Gastrocnemius medialis (tissue), 4 donors: ENCODE measurements at regions of chr14 and their contacts with region 1.

Region 1: DNA sequence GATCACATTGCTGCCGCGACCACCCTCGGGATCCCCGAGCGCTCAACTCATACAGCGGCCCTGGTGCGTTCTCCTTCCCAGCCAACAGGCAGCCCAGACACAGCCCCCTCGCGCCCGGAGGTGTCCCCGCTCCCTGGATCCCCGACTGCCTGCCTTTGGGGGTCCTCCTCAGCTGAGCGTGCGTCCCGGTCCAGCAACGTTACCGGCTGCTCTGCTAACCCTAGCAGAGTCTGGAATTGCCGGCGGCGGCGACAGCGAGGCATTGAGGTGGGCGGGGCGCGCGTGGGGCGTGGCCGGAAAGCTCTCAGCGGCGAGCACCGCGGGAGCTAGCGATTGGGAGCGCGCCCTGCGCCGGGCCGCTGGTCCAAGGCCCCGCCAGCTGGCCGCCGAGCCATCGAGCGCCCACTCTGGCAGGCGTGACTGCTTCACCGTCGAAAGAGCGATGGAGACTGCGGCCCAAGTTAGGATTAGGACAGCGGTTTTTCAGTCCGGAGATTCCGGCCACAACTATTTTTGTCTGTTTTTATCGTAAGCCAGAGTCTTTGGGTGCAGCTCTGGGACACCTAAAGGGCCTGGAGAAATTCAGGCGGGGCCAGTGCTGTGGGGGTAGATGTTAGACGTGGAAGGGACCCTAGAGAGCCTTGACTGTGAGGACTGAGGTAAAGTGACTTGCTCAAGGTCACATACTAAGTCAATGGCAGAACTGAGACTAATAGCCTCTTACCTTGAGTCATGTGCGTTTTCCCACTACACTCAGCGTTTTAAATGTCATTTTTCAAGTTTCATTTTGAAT is at the start of gene HEATR5A:
- DNase-seq: peak; percentile 91 to 92
- ATAC-seq: peak; percentile 93
- H3K4me3 ChIP-seq: peak within 1 kb of the TSS; percentile 80 to 97 (median 96)
- H3K27ac ChIP-seq: peak within 1 kb of the TSS; percentile 92 to 94 (median 92)
- H3K4me1 ChIP-seq: peaks cover 16 to 21% of the 10 kb centered on the region in 2 donors
- H3K27me3 ChIP-seq: no peaks in the 10 kb centered on the region
- CTCF ChIP-seq: peak in 3 of 5 experiments; percentile 29 to 37 (median 32)
- POLR2A ChIP-seq: peak; percentile 99
- total RNA-seq, gene HEATR5A: 11.3 to 39.7 (median 19.3) TPM

Region 2: DNA sequence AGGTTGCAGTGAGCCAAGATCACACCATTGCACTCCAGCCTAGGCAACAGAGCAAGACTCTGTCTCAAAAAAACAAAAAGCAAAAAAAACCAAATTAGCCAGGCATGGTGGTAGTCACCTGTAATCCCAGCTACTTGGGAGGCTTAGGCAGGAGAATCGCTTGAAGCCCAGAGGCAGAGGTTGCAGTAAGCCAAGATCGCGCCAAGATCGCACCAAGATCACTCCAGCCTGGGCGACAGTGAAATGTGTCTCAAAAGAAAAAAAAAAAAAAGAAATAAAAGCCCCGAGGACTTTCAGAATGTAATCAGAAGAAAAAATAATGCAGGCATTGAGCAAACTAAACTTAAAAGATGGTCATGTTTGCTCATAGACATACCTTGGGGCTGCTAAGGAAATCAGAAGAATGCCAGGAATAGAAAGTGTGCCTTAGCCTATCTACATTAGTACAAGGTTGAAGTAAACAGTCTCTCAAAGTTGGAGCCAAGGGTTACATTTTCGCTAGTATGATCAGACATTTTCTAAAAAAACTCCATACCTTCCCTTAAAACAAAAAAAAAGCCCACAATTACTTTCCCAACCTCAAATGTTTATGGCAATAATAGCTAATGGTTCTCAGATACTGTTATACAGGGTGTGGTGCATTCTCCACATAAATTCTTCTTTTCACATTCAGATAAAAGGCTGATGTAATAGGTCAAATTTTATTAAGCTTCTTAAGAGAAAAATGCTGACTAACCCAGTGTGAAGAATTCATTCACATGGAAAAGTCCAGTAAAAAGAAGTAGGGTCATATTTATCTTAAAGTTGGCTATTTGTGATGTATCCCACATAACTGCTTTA is 21.0 kb after region 1 on chr14:
- in situ Hi-C with region 1: no loop called
- intact Hi-C with region 1: no loop called
- DNase-seq: no peak
- ATAC-seq: no peak
- H3K4me3 ChIP-seq: no peak overlapping the region
- H3K27ac ChIP-seq: no peak overlapping the region
- H3K4me1 ChIP-seq: no peaks in the 10 kb centered on the region
- H3K27me3 ChIP-seq: no peaks in the 10 kb centered on the region
- CTCF ChIP-seq: no peak
- POLR2A ChIP-seq: no peak

Region 3: DNA sequence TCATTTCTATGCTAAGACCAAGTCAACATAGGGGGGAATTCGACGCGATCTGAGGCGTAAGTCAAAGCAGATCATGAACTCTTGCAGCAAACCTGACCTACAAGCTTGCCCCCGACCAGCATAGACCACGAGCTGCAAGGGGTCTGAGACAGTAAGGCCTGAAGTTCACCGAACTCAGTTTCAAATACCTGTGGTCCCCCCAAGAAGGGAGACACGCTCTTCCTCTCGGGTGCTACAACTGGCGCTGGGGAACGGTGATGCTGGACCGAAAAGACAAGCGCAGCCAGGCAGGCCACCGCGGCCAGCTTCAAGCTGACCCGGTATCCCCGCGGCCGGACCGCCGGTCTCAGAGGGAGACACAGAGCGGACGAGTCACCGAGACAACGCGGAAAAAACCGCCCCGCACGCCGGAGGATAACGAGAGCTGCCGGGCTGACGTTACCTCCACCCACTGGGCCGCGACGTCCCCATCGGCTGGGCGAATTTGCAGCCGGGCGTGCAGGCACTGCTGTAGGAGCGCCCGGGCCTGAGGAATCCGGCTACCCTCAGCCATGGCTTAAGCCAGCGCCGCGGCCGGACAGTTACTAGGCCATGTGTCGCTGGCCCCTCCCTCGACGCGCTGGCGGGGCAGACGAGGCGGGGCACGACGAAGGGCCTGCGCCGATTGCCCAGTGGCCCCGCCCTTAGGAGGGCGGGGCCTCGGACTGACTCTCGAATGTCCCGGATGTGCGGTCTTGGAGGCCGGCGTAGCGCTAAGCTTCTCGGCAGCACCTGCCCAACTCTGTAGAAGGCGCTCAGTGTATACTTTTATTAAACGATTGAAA is 36.5 kb after region 1 on chr14 and contains the start of gene DTD2:
- in situ Hi-C with region 1: no loop called
- intact Hi-C with region 1: loop called (anchors 2 kb)
- DNase-seq: peak; percentile 89 to 93
- ATAC-seq: peak; percentile 97 to 98
- H3K4me3 ChIP-seq: peak within 1 kb of the TSS; percentile 68 to 79 (median 74)
- H3K27ac ChIP-seq: peak within 1 kb of the TSS; percentile 85 to 90 (median 89)
- H3K4me1 ChIP-seq: peaks cover 9 to 11% of the 10 kb centered on the region in 2 donors
- H3K27me3 ChIP-seq: no peaks in the 10 kb centered on the region
- CTCF ChIP-seq: no peak
- POLR2A ChIP-seq: peak; percentile 56 to 80
- total RNA-seq, gene DTD2: 4.0 to 7.8 (median 4.8) TPM

Region 4: GRCh38 chr14:31561155-31561846 is 140.8 kb after region 1 on chr14 and contains the start of gene NUBPL:
- in situ Hi-C with region 1: no loop called
- intact Hi-C with region 1: loop called (anchors 1 kb)
- DNase-seq: peak; percentile 83 to 93
- ATAC-seq: peak; percentile 98 to 99
- H3K4me3 ChIP-seq: peak within 1 kb of the TSS; percentile 89 to 98 (median 96)
- H3K27ac ChIP-seq: peak within 1 kb of the TSS; percentile 86 to 90 (median 88)
- H3K4me1 ChIP-seq: peaks cover 5 to 10% of the 10 kb centered on the region in 2 donors
- H3K27me3 ChIP-seq: no peaks in the 10 kb centered on the region
- CTCF ChIP-seq: no peak
- POLR2A ChIP-seq: no peak
- total RNA-seq, gene NUBPL: 4.5 to 12.3 (median 7.7) TPM